Dendritic cell treated with granulocyte-macrophage colony-stimulating factor and Interleukin-4, amounts not matched to agents 40 ng/mL and 50 ng/mL, for 4 days (primary cell): ENCODE measurements at regions of chr2 and their contacts with region 1.

Region 1: DNA sequence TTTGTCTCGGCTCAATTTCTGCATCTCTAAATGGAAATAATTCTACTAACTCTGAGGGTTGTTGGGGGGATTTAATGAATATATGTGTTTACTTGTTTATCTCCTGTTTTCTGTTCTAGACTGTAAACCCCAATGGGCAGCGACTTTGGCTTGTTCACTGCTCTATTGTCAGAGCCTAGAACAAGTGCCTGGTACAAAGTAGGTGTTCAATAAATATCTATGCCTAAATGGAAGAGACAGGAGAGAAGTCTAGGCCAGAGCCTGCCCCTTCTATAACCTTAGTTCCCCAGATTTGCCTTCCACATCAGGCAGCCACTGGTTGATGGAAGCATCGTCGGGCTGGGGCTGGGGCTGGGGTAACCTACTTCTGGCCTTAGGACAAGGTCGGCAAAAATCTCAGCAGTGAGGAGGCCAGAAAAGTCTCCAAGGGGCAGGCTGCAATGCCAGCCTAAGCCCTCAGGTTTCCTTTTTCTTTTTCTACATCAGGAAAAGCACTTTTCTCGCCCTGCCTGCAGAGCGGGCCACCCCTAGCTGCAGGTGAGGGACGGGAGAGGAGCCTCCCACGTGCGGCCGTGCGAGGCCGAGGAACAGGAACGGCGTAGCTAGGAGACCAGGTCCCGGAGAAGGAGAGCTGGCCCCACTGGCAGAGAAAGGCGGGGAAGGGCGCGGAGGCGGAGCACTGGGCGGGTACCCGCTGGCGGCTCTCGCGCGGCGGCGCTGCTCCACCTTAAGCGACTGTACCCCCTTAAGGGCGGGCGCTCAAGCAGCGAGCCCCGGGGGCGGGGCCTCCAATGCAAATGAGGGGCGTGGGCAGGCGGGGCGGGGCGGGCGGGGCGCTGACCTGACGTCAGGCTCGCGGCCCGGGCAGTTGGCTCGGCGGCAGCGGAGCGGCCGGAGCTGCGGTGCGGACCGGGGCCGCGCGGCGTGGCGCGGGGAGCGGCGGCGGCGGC is at the start of gene CNNM4:
- H3K4me3 Mint-ChIP-seq: peak within 1 kb of the TSS; percentile 87
- H3K27ac Mint-ChIP-seq: peak within 1 kb of the TSS; percentile 84
- H3K4me1 Mint-ChIP-seq: peaks cover 61% of the 10 kb centered on the region
- H3K27me3 Mint-ChIP-seq: peaks cover 2% of the 10 kb centered on the region

Region 2: DNA sequence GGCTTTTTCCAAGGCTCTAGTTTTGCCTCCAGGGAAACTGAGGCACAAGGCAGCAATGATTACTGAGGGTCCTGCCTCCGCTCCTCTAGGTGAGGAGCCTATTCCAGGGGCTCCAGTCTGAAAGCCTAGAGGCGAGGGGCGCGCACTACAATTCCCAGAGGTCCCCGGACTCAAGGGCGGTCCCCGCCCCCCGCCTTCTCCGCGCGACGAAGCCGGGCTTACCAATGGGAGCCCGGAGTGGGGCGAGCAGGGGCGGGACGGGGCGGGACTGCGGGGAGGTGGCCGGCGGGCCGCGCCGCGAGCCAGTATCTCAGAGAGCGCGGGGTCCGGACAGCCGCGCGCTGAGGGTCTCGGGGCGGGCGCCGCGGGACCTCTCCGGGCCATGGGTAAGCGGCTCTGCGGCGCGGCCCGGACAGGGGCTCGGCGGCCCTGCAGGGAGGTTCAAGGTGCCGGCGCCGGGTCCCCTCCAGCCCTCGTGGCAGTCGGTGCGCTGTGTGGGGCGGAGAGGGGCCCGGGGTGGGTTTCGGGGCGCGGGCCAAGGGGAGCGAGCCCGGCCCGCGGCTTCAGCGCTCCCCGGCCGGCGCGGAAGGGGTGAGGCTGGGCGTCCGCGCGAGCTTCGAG is 223.8 kb before region 1 on chr2 and contains the start of gene ARID5A:
- intact Hi-C with region 1: loop called (anchors 5 kb)
- H3K4me3 Mint-ChIP-seq: peak within 1 kb of the TSS; percentile 96
- H3K27ac Mint-ChIP-seq: peak within 1 kb of the TSS; percentile 94
- H3K4me1 Mint-ChIP-seq: peaks cover 75% of the 10 kb centered on the region
- H3K27me3 Mint-ChIP-seq: peaks cover 2% of the 10 kb centered on the region

Region 3: DNA sequence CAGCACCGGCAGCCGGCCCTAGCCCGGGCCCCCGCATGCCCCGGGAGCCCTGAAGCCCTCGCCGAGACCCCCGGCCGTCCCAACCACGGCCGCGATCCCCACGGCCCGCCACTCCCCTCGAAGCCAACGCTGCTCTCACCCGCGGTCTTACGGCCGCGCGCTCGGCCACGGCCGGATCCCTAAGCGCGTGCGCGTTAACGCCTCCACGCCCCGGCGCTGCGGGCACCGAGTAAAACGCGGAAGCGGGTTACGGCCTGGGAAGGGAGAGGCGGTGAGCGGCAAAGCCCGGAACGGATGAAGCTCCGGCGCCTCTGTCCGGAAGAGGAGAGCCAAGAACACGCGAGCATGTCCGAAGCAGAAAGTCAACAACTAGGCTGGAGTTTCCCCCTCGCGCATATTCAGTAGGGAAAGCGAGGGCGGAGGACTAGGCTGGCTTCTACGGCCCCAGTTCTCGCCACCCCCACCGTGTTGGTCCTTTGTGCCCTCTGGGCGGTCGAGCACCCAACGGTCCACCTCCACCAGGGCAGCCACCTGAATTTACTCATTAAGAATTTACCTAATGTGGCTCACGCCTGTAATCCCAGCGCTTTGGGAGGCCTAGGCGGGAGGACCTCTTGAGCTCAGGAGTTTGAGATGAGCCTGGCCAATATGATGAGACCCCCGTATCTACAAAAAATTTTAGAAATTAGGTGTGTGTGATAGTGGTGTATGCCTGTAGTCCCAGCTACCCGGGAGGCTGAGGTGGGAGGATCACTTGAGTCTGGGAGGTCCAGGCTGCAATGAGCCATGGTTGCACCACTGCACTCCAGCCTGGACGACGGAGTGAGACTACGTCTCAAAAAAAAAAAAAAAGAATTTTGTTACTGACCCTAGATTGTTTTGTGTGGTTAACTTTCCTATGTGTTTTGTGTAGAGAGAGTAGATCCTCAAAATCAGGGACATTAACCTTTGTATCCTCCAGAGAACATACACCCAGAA is 121.9 kb before region 1 on chr2 and contains the start of gene KANSL3:
- intact Hi-C with region 1: loop called (anchors 5 kb)
- H3K4me3 Mint-ChIP-seq: peak within 1 kb of the TSS; percentile 91
- H3K27ac Mint-ChIP-seq: peak within 1 kb of the TSS; percentile 92
- H3K4me1 Mint-ChIP-seq: peaks cover 33% of the 10 kb centered on the region
- H3K27me3 Mint-ChIP-seq: peaks cover 2% of the 10 kb centered on the region

Region 4: DNA sequence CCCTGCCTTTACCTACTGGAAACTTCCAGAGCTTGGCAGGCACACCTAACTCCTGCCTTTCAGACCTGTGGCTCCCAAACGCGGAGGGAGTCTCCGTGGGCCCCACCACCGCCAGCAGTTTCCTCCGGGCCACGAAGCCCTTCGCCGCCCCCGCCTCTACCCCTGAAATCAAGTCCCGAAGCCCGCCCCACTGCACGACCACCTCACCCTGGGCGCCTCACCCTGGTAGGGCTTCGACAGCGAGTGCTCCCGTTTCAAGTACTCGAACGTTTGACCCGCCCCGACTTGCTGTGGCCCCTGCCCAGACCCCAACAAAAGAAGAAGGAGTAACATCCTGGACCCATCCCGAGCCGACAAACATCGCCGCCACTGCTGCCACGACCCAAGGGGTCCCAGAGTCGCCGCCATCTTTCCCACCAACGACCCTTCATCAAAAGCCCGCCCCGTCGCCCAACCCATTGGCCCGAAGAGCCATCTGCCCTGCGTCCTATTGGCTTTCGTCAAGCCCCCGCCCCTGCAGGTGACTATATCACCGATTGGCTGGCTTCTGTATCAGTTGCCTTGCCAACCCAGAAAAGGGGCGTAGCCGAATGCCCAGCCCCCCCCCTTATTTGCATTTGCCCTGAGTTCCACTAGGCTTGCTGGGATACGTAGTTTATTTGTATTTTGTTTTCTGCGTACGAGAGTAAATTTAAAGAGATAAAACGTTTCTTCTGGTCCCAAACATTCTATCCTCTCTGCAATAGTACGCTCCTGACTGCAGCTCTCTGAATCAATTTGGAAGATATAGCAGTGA is 20.5 kb before region 1 on chr2 and contains the start of gene LMAN2L:
- intact Hi-C with region 1: loop called (anchors 1 kb)
- H3K4me3 Mint-ChIP-seq: peak within 1 kb of the TSS; percentile 94
- H3K27ac Mint-ChIP-seq: peak within 1 kb of the TSS; percentile 91
- H3K4me1 Mint-ChIP-seq: peaks cover 24% of the 10 kb centered on the region
- H3K27me3 Mint-ChIP-seq: no peaks in the 10 kb centered on the region

Region 5: DNA sequence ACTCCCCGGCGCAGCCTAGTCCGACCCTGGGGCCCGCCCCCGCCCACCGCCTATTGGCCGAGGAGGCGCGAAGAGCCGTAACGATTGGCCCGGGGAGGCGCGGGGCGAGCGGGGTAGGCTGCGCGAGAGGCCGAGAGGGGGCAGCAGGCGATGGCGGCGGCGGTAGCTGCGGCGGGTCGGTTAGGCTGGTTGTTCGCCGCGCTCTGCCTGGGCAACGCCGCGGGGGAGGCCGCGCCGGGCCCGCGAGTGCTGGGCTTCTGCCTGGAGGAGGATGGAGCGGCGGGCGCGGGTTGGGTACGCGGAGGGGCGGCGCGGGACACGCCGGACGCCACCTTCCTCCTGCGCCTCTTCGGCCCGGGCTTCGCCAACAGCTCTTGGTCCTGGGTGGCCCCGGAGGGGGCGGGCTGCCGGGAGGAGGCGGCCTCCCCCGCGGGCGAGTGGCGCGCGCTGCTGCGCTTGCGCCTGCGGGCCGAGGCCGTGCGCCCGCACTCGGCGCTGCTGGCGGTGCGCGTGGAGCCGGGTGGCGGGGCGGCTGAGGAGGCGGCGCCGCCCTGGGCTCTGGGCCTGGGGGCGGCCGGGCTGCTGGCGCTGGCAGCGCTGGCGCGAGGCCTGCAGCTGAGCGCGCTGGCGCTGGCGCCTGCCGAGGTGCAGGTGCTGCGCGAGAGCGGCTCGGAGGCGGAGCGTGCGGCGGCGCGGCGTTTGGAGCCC is 56.0 kb after region 1 on chr2 and contains the start of gene CNNM3:
- intact Hi-C with region 1: loop called (anchors 5 kb)
- H3K4me3 Mint-ChIP-seq: peak within 1 kb of the TSS; percentile 81
- H3K27ac Mint-ChIP-seq: peak within 1 kb of the TSS; percentile 81
- H3K4me1 Mint-ChIP-seq: peaks cover 48% of the 10 kb centered on the region
- H3K27me3 Mint-ChIP-seq: peaks cover 4% of the 10 kb centered on the region